ENCODE measurements at regions of chr3 and their contacts with region 1.

Region 1: DNA sequence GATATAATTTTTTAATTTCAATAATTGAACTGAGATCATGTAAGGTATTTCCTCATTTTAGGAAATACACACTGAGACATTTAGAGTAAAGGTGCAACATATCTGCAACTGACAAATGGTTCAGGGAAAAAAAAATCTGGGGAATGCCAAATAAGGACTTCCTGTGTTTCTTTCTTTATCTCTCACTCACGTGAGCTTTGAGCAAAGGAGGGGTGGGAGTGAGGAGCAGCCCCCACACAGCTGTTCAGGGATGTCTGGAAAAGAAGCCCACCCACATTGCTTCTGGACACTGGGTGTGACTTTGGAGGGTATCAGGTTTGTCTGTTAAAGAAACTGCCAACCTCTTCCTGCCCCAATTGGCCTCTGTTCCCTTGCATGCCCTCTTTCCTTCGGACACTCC is 5.6 kb upstream of the TP63 start:
- DNase-seq: no peak
- H3K4me3 ChIP-seq: no peak overlapping the region
- H3K27ac ChIP-seq: no peak overlapping the region
- H3K4me1 ChIP-seq: no peaks in the 10 kb centered on the region
- H3K27me3 ChIP-seq: no peaks in the 10 kb centered on the region
- CTCF ChIP-seq: no peak
- POLR2A ChIP-seq: no peak

Region 2: GRCh38 chr3:188646592-188646991 is 979.0 kb before region 1 on chr3:
- CTCF ChIA-PET with region 1: no interaction called
- POLR2A ChIA-PET with region 1: no interaction called
- dilution Hi-C with region 1: no loop called
- intact Hi-C with region 1: no loop called
- DNase-seq: peak; percentile 37
- H3K4me3 ChIP-seq: no peak overlapping the region
- H3K27ac ChIP-seq: no peak overlapping the region
- H3K4me1 ChIP-seq: peaks cover 3% of the 10 kb centered on the region
- H3K27me3 ChIP-seq: no peaks in the 10 kb centered on the region
- CTCF ChIP-seq: no peak
- POLR2A ChIP-seq: no peak

Region 3: GRCh38 chr3:189593581-189593980 is 32.0 kb before region 1 on chr3:
- CTCF ChIA-PET with region 1: no interaction called
- POLR2A ChIA-PET with region 1: no interaction called
- dilution Hi-C with region 1: no loop called
- intact Hi-C with region 1: loop called (anchors 2 kb)
- DNase-seq: no peak
- H3K4me3 ChIP-seq: no peak overlapping the region
- H3K27ac ChIP-seq: no peak overlapping the region
- H3K4me1 ChIP-seq: no peaks in the 10 kb centered on the region
- H3K27me3 ChIP-seq: no peaks in the 10 kb centered on the region
- CTCF ChIP-seq: no peak
- POLR2A ChIP-seq: no peak

Region 4: GRCh38 chr3:189685854-189686253 is 60.3 kb after region 1 on chr3:
- CTCF ChIA-PET with region 1: no interaction called
- POLR2A ChIA-PET with region 1: no interaction called
- dilution Hi-C with region 1: no loop called
- intact Hi-C with region 1: no loop called
- DNase-seq: peak; percentile 78
- H3K4me3 ChIP-seq: no peak overlapping the region
- H3K27ac ChIP-seq: peak overlapping the region; percentile 96
- H3K4me1 ChIP-seq: peaks cover 15% of the 10 kb centered on the region
- H3K27me3 ChIP-seq: no peaks in the 10 kb centered on the region
- CTCF ChIP-seq: no peak
- POLR2A ChIP-seq: no peak

Region 5: GRCh38 chr3:190150681-190151080 is 525.1 kb after region 1 on chr3:
- CTCF ChIA-PET with region 1: no interaction called
- POLR2A ChIA-PET with region 1: no interaction called
- dilution Hi-C with region 1: no loop called
- intact Hi-C with region 1: no loop called
- DNase-seq: no peak
- H3K4me3 ChIP-seq: no peak overlapping the region
- H3K27ac ChIP-seq: no peak overlapping the region
- H3K4me1 ChIP-seq: no peaks in the 10 kb centered on the region
- H3K27me3 ChIP-seq: peaks cover 3% of the 10 kb centered on the region in 2 experiments
- CTCF ChIP-seq: no peak
- POLR2A ChIP-seq: no peak

Region 6: GRCh38 chr3:190384241-190384863 is 758.8 kb after region 1 on chr3:
- CTCF ChIA-PET with region 1: no interaction called
- POLR2A ChIA-PET with region 1: no interaction called
- dilution Hi-C with region 1: no loop called
- intact Hi-C with region 1: no loop called
- DNase-seq: peak; percentile 45
- H3K4me3 ChIP-seq: no peak overlapping the region
- H3K27ac ChIP-seq: no peak overlapping the region
- H3K4me1 ChIP-seq: peaks cover 12% of the 10 kb centered on the region
- H3K27me3 ChIP-seq: no peaks in the 10 kb centered on the region
- CTCF ChIP-seq: peak; percentile 8 to 12
- POLR2A ChIP-seq: no peak